MCF 10A (cell line): ENCODE measurements at regions of chrX and their contacts with region 1.

Region 1: GRCh38 chrX:20066968-20067708 is 49.6 kb downstream of the MAP7D2 start:
- DNase-seq: peak; percentile 72
- H3K4me3 Mint-ChIP-seq: peak overlapping the region; percentile 9
- H3K27ac Mint-ChIP-seq: peak overlapping the region; percentile 80
- H3K4me1 Mint-ChIP-seq: peaks cover 24% of the 10 kb centered on the region
- H3K27me3 Mint-ChIP-seq: peaks cover 42% of the 10 kb centered on the region
- CTCF ChIP-seq: peak; percentile 81

Region 2: DNA sequence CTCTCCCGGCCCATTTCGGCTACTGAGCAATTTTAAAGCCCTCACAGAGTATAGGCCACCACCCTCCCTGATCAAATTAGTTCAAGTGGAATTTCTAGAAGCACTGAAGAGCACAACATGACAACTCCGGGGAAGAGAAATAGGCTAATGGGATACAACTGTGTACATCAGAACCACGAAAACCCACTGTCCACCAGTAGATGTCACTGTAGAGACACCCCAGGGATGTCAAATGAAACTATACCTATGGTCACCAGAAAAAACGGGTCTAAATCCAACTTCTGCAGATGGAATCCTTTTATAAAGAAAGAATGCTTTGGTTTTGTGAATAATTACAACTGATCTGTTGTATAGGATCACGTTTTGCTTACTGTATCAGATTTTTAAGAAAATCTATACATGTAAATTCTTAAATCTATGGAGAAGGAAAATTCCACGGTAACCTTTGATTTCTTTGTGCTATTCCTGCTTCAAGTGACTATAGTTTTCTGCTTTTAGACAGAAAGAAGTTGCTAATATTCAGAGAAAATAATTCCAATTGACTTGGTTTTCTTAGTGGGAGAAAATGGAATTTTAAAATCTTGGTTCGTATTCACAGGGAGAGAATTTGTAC is 522.3 kb before region 1 on chrX:
- CTCF ChIA-PET with region 1: no interaction called
- POLR2A ChIA-PET with region 1: no interaction called
- intact Hi-C with region 1: loop called (anchors 1 kb)
- DNase-seq: peak; percentile 71
- H3K4me3 Mint-ChIP-seq: no peak overlapping the region
- H3K27ac Mint-ChIP-seq: no peak overlapping the region
- H3K4me1 Mint-ChIP-seq: no peaks in the 10 kb centered on the region
- H3K27me3 Mint-ChIP-seq: peaks cover 66% of the 10 kb centered on the region
- CTCF ChIP-seq: peak; percentile 79

Region 3: DNA sequence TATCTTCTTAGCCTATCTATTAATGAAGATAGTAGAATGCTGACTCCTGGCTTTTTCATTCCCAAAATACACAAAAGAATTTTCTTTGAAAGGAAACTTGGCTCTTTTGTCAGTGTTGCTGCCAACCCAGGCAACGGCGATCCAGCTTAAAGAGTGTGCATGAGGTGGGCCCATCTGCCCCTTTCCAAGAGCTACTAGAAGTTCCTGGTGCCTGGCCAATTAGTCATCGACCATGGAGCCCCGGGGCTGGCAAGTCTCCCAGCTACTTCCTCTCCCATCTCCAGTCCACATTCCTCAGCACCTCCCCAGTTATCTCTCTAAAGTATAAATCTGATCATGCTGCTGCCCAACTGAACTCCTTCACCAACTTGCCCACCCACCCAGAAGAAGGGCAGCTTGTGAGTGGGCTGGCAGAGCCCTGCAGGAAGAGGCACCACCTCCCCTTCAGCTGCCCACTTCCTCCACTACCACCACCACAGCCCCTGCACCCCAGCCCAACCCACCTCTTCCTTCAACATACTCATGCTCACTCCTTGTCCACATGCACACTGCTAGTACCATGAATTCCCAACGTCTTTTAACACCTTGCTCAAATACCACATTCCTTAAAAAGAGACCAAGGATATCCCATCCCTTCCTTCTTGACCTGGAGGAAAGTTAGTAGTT is 393.6 kb before region 1 on chrX:
- CTCF ChIA-PET with region 1: interaction called, 6 read pairs
- POLR2A ChIA-PET with region 1: no interaction called
- intact Hi-C with region 1: loop called (anchors 5 kb)
- DNase-seq: peak; percentile 98
- H3K4me3 Mint-ChIP-seq: no peak overlapping the region
- H3K27ac Mint-ChIP-seq: no peak overlapping the region
- H3K4me1 Mint-ChIP-seq: peaks cover 31% of the 10 kb centered on the region
- H3K27me3 Mint-ChIP-seq: no peaks in the 10 kb centered on the region
- CTCF ChIP-seq: no peak

Region 4: GRCh38 chrX:19904778-19905367 is 162.3 kb before region 1 on chrX:
- CTCF ChIA-PET with region 1: interaction called, 66 read pairs
- POLR2A ChIA-PET with region 1: interaction called, 3 read pairs
- intact Hi-C with region 1: loop called (anchors 1 kb)
- DNase-seq: peak; percentile 57
- H3K4me3 Mint-ChIP-seq: no peak overlapping the region
- H3K27ac Mint-ChIP-seq: no peak overlapping the region
- H3K4me1 Mint-ChIP-seq: no peaks in the 10 kb centered on the region
- H3K27me3 Mint-ChIP-seq: peaks cover 52% of the 10 kb centered on the region
- CTCF ChIP-seq: peak; percentile 60

Region 5: GRCh38 chrX:20046223-20046622 is 20.9 kb before region 1 on chrX:
- CTCF ChIA-PET with region 1: interaction called, 13 read pairs
- POLR2A ChIA-PET with region 1: no interaction called
- intact Hi-C with region 1: no loop called
- DNase-seq: no peak
- H3K4me3 Mint-ChIP-seq: no peak overlapping the region
- H3K27ac Mint-ChIP-seq: no peak overlapping the region
- H3K4me1 Mint-ChIP-seq: no peaks in the 10 kb centered on the region
- H3K27me3 Mint-ChIP-seq: peaks cover 27% of the 10 kb centered on the region
- CTCF ChIP-seq: no peak

Region 6: DNA sequence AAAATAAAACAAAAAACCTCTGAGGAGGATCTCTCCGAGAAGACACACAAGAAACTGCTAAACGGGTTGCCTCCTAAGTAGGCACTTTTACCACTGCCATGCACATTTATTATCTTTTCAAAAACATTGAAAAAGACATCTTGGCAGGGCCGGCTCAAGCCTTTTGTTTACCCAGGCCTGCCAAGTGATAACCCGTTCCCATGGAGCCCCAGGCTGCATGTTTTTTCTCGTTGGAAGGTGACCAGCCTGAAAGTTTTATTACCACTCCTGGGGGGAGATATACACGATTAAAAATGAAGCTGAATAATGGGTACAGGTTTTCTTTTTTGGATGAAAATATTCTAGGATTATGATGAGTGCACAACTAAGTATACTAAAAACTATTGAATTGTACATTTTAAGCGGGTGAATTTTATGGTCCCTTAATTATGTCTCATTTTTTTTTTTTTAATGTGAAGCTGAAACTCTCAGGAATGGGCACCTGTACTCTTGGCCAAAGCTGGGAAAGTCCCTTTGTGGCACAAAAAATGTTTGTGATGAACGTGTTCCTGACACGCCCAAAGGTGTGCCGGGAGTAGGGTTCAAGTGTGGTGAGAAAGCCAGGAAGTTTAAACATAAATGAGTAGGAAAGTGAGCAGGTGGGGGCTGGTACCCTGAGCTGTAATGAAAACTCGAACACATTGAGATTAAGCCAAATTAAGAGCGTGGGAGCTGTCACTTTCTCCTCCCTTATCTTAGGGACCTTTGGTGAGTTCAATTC is 51.1 kb after region 1 on chrX:
- CTCF ChIA-PET with region 1: interaction called, 12 read pairs
- POLR2A ChIA-PET with region 1: interaction called, 6 read pairs
- intact Hi-C with region 1: no loop called
- DNase-seq: peak; percentile 19
- H3K4me3 Mint-ChIP-seq: no peak overlapping the region
- H3K27ac Mint-ChIP-seq: peak overlapping the region; percentile 86
- H3K4me1 Mint-ChIP-seq: peaks cover 11% of the 10 kb centered on the region
- H3K27me3 Mint-ChIP-seq: no peaks in the 10 kb centered on the region
- CTCF ChIP-seq: no peak

Region 7: DNA sequence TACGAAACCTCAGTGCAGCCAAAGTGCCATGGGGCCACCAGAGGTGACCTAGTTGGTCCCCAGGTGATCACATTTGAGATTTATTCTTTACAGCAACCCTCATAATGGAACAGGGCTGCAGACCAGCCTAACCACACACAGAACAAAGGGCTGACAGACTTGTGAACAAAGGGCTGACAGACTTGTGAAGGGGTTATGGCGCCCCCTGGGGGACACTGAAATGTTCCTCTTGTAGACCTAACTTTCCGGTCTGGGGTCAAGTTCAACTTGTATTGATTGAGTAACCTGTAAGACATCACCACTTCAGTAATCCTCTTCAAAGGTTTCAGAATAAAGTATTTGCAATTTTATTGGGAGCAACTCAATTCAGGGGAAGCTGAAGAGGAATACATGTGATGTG is 375.5 kb after region 1 on chrX:
- CTCF ChIA-PET with region 1: no interaction called
- POLR2A ChIA-PET with region 1: no interaction called
- intact Hi-C with region 1: loop called (anchors 10 kb)
- DNase-seq: peak; percentile 82
- H3K4me3 Mint-ChIP-seq: no peak overlapping the region
- H3K27ac Mint-ChIP-seq: no peak overlapping the region
- H3K4me1 Mint-ChIP-seq: no peaks in the 10 kb centered on the region
- H3K27me3 Mint-ChIP-seq: peaks cover 21% of the 10 kb centered on the region
- CTCF ChIP-seq: peak; percentile 68